CD4-positive, alpha-beta T cell (primary cell): ENCODE measurements at regions of chr9 and their contacts with region 1.

Region 1: DNA sequence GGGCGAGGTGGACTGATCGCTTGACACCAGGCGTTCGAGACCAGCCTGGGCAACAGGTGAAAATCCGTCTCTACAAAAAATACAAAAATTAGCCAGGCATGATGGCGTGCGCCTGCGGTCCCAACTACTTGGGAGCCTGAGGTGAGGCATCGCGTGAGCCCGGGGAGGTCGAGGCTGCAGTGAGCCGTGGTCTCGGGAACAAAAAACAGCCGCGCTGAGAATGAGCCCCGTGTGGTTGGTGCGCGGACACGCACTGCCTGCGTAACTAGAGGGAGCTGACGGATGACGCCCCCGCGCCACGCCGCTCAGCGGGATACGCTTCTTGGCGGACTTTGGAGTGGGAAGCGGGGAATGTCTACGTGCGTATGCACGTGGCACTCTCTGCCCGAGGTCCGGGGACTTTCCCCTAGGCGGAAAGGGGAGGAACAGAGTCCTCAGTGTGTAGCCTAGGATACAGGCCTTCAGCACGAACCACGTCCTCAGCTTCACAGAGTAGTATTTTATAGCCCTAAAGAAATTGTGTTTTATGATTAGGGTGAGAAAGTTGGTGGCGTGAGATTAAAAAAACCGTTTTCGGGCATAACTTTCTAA is at the start of gene RMRP:
- DNase-seq: peak; percentile 63 to 97 (median 77)
- ATAC-seq: peak; percentile 75
- H3K4me3 ChIP-seq: peak within 1 kb of the TSS; percentile 88
- H3K4me3 Mint-ChIP-seq: peak within 1 kb of the TSS; percentile 96
- H3K27ac ChIP-seq: peak within 1 kb of the TSS; percentile 99 to 100
- H3K27ac Mint-ChIP-seq: peak within 1 kb of the TSS; percentile 100
- H3K4me1 ChIP-seq: peaks cover 73% of the 10 kb centered on the region
- H3K4me1 Mint-ChIP-seq: peaks cover 69% of the 10 kb centered on the region
- H3K27me3 ChIP-seq: no peaks in the 10 kb centered on the region
- H3K27me3 Mint-ChIP-seq: peaks cover 8% of the 10 kb centered on the region
- CTCF ChIP-seq: no peak
- total RNA-seq, gene RMRP: 14,857 to 24,615 TPM

Region 2: GRCh38 chr9:35611230-35611797 is 46.3 kb before region 1 on chr9:
- CTCF ChIA-PET with region 1: interaction called, 22 read pairs
- POLR2A ChIA-PET with region 1: interaction called, 20 read pairs
- intact Hi-C with region 1: loop called (anchors 5 kb)
- DNase-seq: peak; percentile 33 to 81 (median 47)
- ATAC-seq: peak; percentile 98
- H3K4me3 ChIP-seq: no peak overlapping the region
- H3K4me3 Mint-ChIP-seq: peak overlapping the region; percentile 5
- H3K27ac ChIP-seq: no peak overlapping the region
- H3K27ac Mint-ChIP-seq: no peak overlapping the region
- H3K4me1 ChIP-seq: peaks cover 26% of the 10 kb centered on the region
- H3K4me1 Mint-ChIP-seq: peaks cover 32% of the 10 kb centered on the region
- H3K27me3 ChIP-seq: no peaks in the 10 kb centered on the region
- H3K27me3 Mint-ChIP-seq: no peaks in the 10 kb centered on the region
- CTCF ChIP-seq: peak; percentile 60

Region 3: GRCh38 chr9:35696525-35697215 is 39.0 kb after region 1 on chr9:
- CTCF ChIA-PET with region 1: interaction called, 31 read pairs
- POLR2A ChIA-PET with region 1: interaction called, 24 read pairs
- intact Hi-C with region 1: loop called (anchors 2 kb)
- DNase-seq: peak; percentile 29 to 78 (median 46)
- ATAC-seq: peak; percentile 94
- H3K4me3 ChIP-seq: no peak overlapping the region
- H3K4me3 Mint-ChIP-seq: no peak overlapping the region
- H3K27ac ChIP-seq: no peak overlapping the region
- H3K27ac Mint-ChIP-seq: peak overlapping the region; percentile 24
- H3K4me1 ChIP-seq: peaks cover 10% of the 10 kb centered on the region
- H3K4me1 Mint-ChIP-seq: peaks cover 18% of the 10 kb centered on the region
- H3K27me3 ChIP-seq: no peaks in the 10 kb centered on the region
- H3K27me3 Mint-ChIP-seq: no peaks in the 10 kb centered on the region
- CTCF ChIP-seq: peak; percentile 97

Region 4: GRCh38 chr9:35756275-35757225 is 98.9 kb after region 1 on chr9:
- CTCF ChIA-PET with region 1: interaction called, 16 read pairs
- POLR2A ChIA-PET with region 1: interaction called, 6 read pairs
- intact Hi-C with region 1: no loop called
- DNase-seq: peak; percentile 68 to 87 (median 74)
- ATAC-seq: peak; percentile 97
- H3K4me3 ChIP-seq: peak overlapping the region; percentile 91
- H3K4me3 Mint-ChIP-seq: peak overlapping the region; percentile 95
- H3K27ac ChIP-seq: peak overlapping the region; percentile 72 to 80
- H3K27ac Mint-ChIP-seq: peak overlapping the region; percentile 81
- H3K4me1 ChIP-seq: peaks cover 20% of the 10 kb centered on the region
- H3K4me1 Mint-ChIP-seq: peaks cover 54% of the 10 kb centered on the region
- H3K27me3 ChIP-seq: no peaks in the 10 kb centered on the region
- H3K27me3 Mint-ChIP-seq: no peaks in the 10 kb centered on the region
- CTCF ChIP-seq: peak; percentile 77

Region 5: DNA sequence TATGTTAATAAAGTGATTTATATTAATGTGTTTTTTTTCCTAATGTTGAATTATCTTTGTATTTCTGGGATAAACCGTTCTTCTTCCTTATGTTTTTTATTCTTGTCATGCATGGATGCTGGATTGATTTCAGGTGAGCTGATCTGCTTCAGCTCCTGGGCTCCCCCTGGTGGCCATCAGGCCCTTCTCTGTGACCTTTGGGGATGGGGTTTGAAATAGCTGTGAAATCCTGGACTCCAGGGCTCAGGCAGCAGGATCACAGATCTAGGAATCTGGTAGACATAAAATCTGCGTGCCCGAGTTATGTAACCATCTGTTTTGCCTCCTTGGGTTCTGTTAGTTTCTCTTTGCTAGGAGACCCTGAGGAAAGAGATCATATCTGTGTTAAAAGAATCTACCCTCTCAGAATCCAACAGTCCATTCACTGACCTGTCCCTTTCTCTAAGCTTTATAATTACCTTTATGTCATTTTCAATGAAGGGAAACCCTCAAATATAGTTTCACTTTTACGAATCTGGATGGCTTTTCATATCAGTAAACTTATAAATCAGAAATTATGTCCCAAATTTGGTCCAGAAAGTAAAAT is 224.7 kb after region 1 on chr9:
- CTCF ChIA-PET with region 1: no interaction called
- POLR2A ChIA-PET with region 1: no interaction called
- intact Hi-C with region 1: loop called in 1 of 2 experiments (anchors 1 kb)
- DNase-seq: peak; percentile 68 to 90 (median 78)
- ATAC-seq: peak; percentile 64
- H3K4me3 ChIP-seq: no peak overlapping the region
- H3K4me3 Mint-ChIP-seq: no peak overlapping the region
- H3K27ac ChIP-seq: no peak overlapping the region
- H3K27ac Mint-ChIP-seq: no peak overlapping the region
- H3K4me1 ChIP-seq: no peaks in the 10 kb centered on the region
- H3K4me1 Mint-ChIP-seq: no peaks in the 10 kb centered on the region
- H3K27me3 ChIP-seq: no peaks in the 10 kb centered on the region
- H3K27me3 Mint-ChIP-seq: peaks cover 13% of the 10 kb centered on the region
- CTCF ChIP-seq: peak; percentile 98